Heart left ventricle (tissue), 16 donors: ENCODE measurements at regions of chr16 and their contacts with region 1.

Region 1: DNA sequence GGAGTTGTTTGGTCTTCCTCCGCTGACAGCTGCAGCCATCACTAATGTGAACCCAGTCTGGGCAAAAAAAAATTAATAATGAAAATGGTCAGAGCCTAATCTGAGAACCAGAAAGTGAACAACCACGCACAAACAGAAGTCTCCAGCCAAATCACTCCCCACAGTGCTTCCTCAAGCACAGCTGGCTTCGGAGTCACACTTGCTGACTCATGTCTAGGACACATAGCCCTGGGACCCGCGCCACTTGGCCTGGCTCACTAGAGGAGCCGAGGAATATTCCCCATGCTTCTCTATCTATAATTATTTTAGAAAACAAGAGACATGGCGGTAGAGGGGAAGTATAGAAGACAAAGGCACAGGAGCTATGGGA is 109.1 kb downstream of the ZFHX3 start:
- DNase-seq: peak; percentile 88 to 97 (median 89)
- ATAC-seq: peak; percentile 94 to 96 (median 96)
- H3K4me3 ChIP-seq: peak overlapping the region in 9 of 12 donors; percentile 2 to 39 (median 17)
- H3K27ac ChIP-seq: peak overlapping the region; percentile 62 to 91 (median 78)
- H3K4me1 ChIP-seq: peaks cover 0 to 56% (median 37%) of the 10 kb centered on the region in 12 donors
- H3K27me3 ChIP-seq: no peaks in the 10 kb centered on the region
- CTCF ChIP-seq: no peak
- POLR2A ChIP-seq: no peak

Region 2: DNA sequence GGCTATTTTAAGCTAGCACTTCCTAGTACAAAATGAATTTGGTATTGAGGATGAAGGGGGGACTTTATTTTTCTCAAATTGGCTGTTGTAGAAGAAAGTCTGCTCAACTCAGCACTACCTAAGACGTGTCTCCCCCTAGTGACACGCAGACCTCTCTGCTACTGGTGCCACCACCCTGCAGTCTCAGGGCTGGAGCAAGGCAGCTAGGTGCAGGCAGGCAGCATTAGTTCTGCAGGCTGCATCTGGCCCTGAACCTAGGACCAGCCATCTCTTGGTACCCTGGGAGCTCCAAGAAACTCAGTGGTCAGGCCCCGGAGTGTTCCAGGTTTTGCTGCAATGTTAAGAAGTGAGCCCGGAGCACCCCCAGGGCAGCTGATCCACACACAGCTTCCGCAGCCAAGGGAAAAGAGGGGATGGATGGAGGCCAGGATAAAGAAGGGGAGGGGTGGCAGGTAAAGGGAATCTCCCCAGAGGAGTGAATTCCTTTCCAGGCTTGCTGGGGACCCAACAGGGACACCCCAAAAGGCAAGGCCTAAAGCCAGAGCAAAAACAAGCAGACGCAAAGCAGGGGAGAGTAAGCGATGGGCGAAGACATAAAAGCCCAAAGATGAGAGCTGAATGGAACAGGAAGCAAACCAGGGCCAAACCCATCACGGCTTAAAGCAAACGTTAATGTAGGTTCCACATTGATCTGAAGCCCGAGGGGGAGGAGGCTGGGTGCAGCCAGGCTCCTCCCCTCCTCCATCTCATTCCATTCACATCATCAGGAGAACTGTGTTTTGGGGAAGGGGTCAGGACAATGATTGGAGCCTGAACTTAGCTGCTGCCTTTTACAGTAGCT is 91.4 kb before region 1 on chr16:
- intact Hi-C with region 1: loop called in 6 of 10 experiments (anchors 5 to 10 kb)
- DNase-seq: peak in 1 of 5 donors; percentile 36
- ATAC-seq: peak in 3 of 4 donors; percentile 36 to 49 (median 47)
- H3K4me3 ChIP-seq: no peak overlapping the region
- H3K27ac ChIP-seq: peak overlapping the region; percentile 15 to 91 (median 70)
- H3K4me1 ChIP-seq: peaks cover 0 to 78% (median 52%) of the 10 kb centered on the region in 12 donors
- H3K27me3 ChIP-seq: no peaks in the 10 kb centered on the region
- CTCF ChIP-seq: peak in 10 of 12 donors; percentile 13 to 62 (median 42)
- POLR2A ChIP-seq: no peak

Region 3: GRCh38 chr16:72876221-72876620 is 62.6 kb before region 1 on chr16:
- intact Hi-C with region 1: loop called in 1 of 10 experiments (anchors 2 kb)
- DNase-seq: peak; percentile 79 to 83 (median 82)
- ATAC-seq: peak; percentile 61 to 84 (median 80)
- H3K4me3 ChIP-seq: no peak overlapping the region
- H3K27ac ChIP-seq: peak overlapping the region in 8 of 12 donors; percentile 27 to 73 (median 54)
- H3K4me1 ChIP-seq: peaks cover 0 to 61% (median 34%) of the 10 kb centered on the region in 12 donors
- H3K27me3 ChIP-seq: no peaks in the 10 kb centered on the region
- CTCF ChIP-seq: no peak
- POLR2A ChIP-seq: no peak

Region 4: GRCh38 chr16:73000020-73000906 is 61.5 kb after region 1 on chr16:
- intact Hi-C with region 1: no loop called
- DNase-seq: peak in 4 of 5 donors; percentile 33 to 53 (median 42)
- ATAC-seq: peak; percentile 75 to 78 (median 76)
- H3K4me3 ChIP-seq: peak overlapping the region in 8 of 12 donors; percentile 0 to 42 (median 14)
- H3K27ac ChIP-seq: peak overlapping the region; percentile 14 to 86 (median 63)
- H3K4me1 ChIP-seq: peaks cover 0 to 45% (median 15%) of the 10 kb centered on the region in 12 donors
- H3K27me3 ChIP-seq: no peaks in the 10 kb centered on the region
- CTCF ChIP-seq: no peak
- POLR2A ChIP-seq: no peak

Region 5: GRCh38 chr16:73032541-73033267 is 93.9 kb after region 1 on chr16:
- intact Hi-C with region 1: no loop called
- DNase-seq: no peak
- ATAC-seq: peak in 1 of 4 donors; percentile 28
- H3K4me3 ChIP-seq: peak overlapping the region in 1 of 12 donors; percentile 10
- H3K27ac ChIP-seq: peak overlapping the region in 5 of 12 donors; percentile 8 to 28 (median 25)
- H3K4me1 ChIP-seq: peaks cover 9 to 93% (median 40%) of the 10 kb centered on the region in 12 donors
- H3K27me3 ChIP-seq: no peaks in the 10 kb centered on the region
- CTCF ChIP-seq: peak in 1 of 12 donors; percentile 21
- POLR2A ChIP-seq: no peak

Region 6: DNA sequence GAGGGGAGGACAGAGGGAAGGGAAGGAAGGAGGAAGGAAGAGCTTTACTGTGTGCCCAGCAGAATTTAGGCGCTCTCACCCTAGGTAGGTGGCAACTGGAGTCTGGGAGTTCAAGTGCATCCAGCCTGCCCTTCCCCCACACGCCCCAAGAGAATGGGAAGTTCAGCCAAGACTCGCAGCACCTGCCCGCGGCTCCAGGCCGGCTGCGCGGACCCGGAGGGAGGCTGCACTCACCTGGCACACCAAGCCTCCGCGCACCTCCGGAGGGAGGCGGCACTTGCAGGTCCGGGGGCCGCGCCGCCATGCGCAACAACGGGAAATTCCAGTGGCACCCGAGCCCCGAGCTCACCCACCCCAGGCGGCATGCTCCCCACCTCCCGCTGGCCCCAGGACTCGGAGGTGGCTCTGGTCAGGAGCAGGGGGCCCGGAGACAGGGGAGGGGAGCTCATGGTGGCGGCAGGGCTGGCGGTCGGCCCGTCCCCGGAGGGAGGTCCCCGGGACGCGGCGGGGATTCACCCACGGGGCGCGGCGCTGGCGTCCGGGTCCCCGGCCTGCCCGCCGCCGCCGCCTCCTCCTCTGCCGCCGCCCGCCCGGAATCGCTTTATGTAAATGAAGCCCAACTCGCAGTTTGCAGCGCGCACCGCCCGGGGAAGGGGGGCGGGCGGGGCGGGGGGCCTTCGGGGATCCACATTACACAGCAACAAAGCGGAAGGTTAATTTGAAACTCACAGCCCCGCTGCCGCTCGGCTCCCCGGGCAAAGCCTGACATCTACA is 108.9 kb after region 1 on chr16 and contains the start of gene ZFHX3:
- intact Hi-C with region 1: loop called in 6 of 10 experiments (anchors 5 to 10 kb)
- DNase-seq: peak; percentile 72 to 85 (median 82)
- ATAC-seq: peak; percentile 33 to 79 (median 73)
- H3K4me3 ChIP-seq: peak within 1 kb of the TSS; percentile 64 to 98 (median 82)
- H3K27ac ChIP-seq: peak within 1 kb of the TSS; percentile 87 to 97 (median 91)
- H3K4me1 ChIP-seq: peaks cover 6 to 89% (median 58%) of the 10 kb centered on the region in 12 donors
- H3K27me3 ChIP-seq: no peaks in the 10 kb centered on the region
- CTCF ChIP-seq: peak in 6 of 12 donors; percentile 9 to 48 (median 34)
- POLR2A ChIP-seq: peak in 1 of 2 donors; percentile 26
- total RNA-seq, gene ZFHX3: 7.8 to 21.6 (median 14.5) TPM

Region 7: GRCh38 chr16:73172241-73172972 is 233.6 kb after region 1 on chr16:
- intact Hi-C with region 1: loop called in 1 of 10 experiments (anchors 10 kb)
- DNase-seq: peak; percentile 77 to 88 (median 82)
- ATAC-seq: peak; percentile 57 to 81 (median 76)
- H3K4me3 ChIP-seq: peak overlapping the region in 1 of 12 donors; percentile 37
- H3K27ac ChIP-seq: peak overlapping the region; percentile 58 to 87 (median 73)
- H3K4me1 ChIP-seq: peaks cover 0 to 44% (median 14%) of the 10 kb centered on the region in 12 donors
- H3K27me3 ChIP-seq: no peaks in the 10 kb centered on the region
- CTCF ChIP-seq: peak in 8 of 12 donors; percentile 12 to 52 (median 40)
- POLR2A ChIP-seq: no peak